Posterior cingulate gyrus (tissue), 11 donors: ENCODE measurements at regions of chr6 and their contacts with region 1.

Region 1: GRCh38 chr6:22145823-22146677 is 150.8 kb downstream of the PRL start:
- DNase-seq: peak; percentile 73 to 96 (median 80)

Region 2: GRCh38 chr6:22095836-22096235 is 50.2 kb before region 1 on chr6:
- intact Hi-C with region 1: no loop called
- DNase-seq: no peak

Region 3: DNA sequence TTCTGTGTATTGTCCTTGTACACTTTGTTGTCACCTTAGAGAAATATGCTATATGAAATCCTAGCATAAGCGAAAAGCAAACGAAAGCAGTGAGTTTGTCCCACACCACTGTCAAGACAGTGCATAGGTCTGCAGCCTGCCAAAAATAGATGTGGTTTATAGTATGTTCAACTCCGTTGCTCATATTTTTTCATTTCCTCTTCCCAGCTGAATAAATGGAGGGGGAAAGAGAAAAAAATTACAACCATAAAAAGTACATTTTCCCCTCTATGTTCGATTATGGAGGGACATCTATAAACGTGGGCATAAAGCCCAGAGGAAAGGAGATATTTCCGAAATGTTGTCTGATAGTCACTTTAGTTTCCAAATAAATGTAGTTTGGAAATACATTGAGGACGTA is 125.0 kb after region 1 on chr6:
- intact Hi-C with region 1: no loop called
- DNase-seq: no peak

Region 4: DNA sequence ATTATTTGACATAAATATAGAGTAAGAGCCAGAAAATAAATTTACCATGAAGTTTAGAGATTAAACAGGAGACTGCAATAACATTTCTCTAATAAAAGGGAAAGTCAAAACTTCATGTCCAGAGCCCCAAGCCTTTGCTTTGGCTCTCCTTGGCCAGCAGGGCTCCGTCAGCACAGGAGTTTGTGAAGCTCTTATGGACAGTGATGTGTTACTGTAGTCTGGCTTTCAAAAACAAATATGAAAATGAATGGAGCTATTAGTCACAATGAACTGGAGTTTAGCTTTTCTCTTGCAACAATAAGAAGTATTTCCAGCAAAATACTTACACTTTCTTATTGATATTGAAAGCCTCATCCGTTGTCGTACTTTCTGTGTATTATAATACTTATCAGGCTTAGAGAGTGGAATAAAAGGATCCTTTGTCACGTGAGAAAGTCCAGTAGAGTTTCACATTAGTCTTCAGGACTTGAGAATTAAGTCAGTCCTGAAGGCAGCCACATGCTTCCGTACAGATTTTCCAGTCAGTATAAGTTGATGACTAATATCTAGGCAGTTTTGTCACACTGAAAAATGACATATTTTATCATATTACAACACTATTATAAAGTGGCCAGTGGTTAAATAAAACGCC is 267.7 kb after region 1 on chr6:
- intact Hi-C with region 1: no loop called
- DNase-seq: no peak

Region 5: GRCh38 chr6:22737331-22737730 is 591.3 kb after region 1 on chr6:
- intact Hi-C with region 1: loop called (anchors 5 kb)
- DNase-seq: peak in 9 of 10 donors; percentile 10 to 86 (median 56)

Region 6: GRCh38 chr6:23446394-23447046 is 1300.5 kb after region 1 on chr6:
- intact Hi-C with region 1: loop called (anchors 10 kb)
- DNase-seq: no peak